ENCODE measurements at regions of chr17 and their contacts with region 1.

Region 1: DNA sequence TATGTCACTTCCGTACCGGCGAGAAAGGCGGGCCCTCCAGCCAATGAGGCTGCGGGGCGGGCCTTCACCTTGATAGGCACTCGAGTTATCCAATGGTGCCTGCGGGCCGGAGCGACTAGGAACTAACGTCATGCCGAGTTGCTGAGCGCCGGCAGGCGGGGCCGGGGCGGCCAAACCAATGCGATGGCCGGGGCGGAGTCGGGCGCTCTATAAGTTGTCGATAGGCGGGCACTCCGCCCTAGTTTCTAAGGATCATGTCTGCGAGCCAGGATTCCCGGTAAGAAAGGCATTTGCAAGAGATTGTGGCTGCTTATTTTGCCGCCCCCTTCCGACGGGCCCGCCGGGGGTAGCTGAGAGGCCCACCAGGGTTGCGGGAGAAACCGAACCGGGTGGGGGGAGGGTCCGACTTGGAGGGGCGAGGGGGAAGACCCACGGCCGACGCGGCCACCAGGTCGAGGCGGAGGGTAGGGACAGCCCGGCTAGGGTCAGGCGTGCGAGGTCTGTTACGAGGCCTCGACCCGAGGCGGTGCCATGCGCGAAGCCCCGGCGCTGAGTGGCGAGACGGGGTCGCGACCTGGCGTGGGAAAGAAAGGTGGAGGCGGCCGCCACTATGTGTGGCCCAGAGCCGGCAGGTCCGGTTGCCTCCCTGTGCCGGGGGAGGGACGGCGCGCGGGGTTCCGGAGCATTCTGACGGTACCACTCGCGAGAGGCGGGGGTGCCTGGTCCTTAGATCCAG is 6.7 kb upstream of the CD68 start:
- DNase-seq: peak; percentile 99 to 100 (median 100)
- ATAC-seq: peak; percentile 83
- H3K4me3 ChIP-seq: peak overlapping the region; percentile 100
- H3K4me3 Mint-ChIP-seq: peak overlapping the region; percentile 99
- H3K27ac ChIP-seq: peak overlapping the region; percentile 96 to 98
- H3K27ac Mint-ChIP-seq: peak overlapping the region; percentile 99
- H3K4me1 ChIP-seq: peaks cover 50% of the 10 kb centered on the region
- H3K4me1 Mint-ChIP-seq: peaks cover 52% of the 10 kb centered on the region
- H3K27me3 ChIP-seq: no peaks in the 10 kb centered on the region
- H3K27me3 Mint-ChIP-seq: peaks cover 3% of the 10 kb centered on the region
- CTCF ChIP-seq: no peak

Region 2: DNA sequence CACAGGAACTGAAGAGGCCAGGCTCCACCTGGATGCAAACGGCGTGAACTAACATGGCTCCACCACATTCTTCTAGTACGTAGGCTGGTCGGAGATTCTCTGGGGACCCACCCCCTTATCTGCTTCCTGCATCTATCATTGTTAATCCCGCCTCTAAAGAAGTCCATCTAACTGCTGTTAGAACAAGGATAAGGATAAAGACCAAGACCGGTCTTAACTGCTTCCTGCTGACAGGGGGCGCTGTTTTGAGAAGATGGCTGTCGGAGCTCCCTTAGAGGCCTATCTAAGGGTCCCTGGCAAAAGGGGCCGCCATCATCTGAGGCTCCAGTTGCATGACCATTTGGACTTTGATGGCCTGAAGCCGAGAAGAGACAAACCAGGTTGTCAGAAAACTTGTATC is 49.7 kb before region 1 on chr17:
- CTCF ChIA-PET with region 1: no interaction called
- POLR2A ChIA-PET with region 1: no interaction called
- intact Hi-C with region 1: no loop called
- DNase-seq: peak in 13 of 14 experiments; percentile 21 to 76 (median 43)
- ATAC-seq: peak; percentile 49
- H3K4me3 ChIP-seq: no peak overlapping the region
- H3K4me3 Mint-ChIP-seq: no peak overlapping the region
- H3K27ac ChIP-seq: no peak overlapping the region
- H3K27ac Mint-ChIP-seq: no peak overlapping the region
- H3K4me1 ChIP-seq: no peaks in the 10 kb centered on the region
- H3K4me1 Mint-ChIP-seq: peaks cover 5% of the 10 kb centered on the region
- H3K27me3 ChIP-seq: no peaks in the 10 kb centered on the region
- H3K27me3 Mint-ChIP-seq: no peaks in the 10 kb centered on the region
- CTCF ChIP-seq: peak; percentile 59

Region 3: DNA sequence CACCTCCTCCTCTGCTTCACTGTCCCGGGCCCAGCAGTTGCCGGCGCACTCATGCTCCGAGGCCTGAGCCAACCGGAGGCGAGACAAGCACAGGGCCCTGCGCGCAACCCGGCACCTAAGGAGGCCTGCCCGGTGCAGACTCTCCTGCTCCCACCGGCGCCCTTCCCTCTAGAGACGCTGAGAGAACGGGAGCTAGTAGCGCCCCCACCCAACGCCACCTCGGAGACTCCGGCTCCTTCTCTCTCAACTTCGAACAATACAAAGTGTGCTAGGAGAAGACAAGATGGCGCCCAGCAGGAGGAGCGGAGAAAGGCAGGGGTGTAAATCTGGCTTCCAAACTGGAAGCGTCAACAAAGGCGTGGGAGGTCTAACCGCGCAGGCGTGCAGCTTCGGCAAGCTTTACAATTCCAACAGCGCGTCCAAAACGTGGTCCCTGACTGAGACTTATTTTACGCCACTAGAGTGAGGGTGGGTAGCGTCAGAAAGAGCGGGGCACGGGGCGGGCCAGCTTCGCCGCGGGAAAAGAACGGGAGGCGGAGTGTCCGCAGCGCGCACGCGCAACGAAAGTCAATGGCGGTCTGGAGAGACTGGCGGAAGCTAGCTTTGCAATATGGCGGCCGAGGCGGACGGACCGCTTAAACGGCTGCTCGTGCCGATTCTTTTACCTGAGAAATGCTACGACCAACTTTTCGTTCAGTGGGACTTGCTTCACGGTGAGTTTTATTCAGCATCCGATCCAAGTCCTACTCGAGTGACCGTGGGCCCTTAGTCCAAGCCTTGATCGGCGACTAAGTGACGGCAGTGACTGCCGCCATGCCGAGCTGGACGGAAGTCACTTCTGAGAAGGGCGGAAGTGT is 10.7 kb after region 1 on chr17 and contains the start of gene MPDU1:
- CTCF ChIA-PET with region 1: interaction called, 4 read pairs
- POLR2A ChIA-PET with region 1: interaction called, 143 read pairs
- intact Hi-C with region 1: loop called (anchors 1 kb)
- DNase-seq: peak; percentile 89 to 98 (median 94)
- ATAC-seq: peak; percentile 85
- H3K4me3 ChIP-seq: peak within 1 kb of the TSS; percentile 86
- H3K4me3 Mint-ChIP-seq: peak within 1 kb of the TSS; percentile 98
- H3K27ac ChIP-seq: peak within 1 kb of the TSS; percentile 78 to 98
- H3K27ac Mint-ChIP-seq: peak within 1 kb of the TSS; percentile 98
- H3K4me1 ChIP-seq: peaks cover 56% of the 10 kb centered on the region
- H3K4me1 Mint-ChIP-seq: peaks cover 52% of the 10 kb centered on the region
- H3K27me3 ChIP-seq: no peaks in the 10 kb centered on the region
- H3K27me3 Mint-ChIP-seq: no peaks in the 10 kb centered on the region
- CTCF ChIP-seq: no peak
- total RNA-seq, gene MPDU1: 12.0 to 12.9 TPM

Region 4: DNA sequence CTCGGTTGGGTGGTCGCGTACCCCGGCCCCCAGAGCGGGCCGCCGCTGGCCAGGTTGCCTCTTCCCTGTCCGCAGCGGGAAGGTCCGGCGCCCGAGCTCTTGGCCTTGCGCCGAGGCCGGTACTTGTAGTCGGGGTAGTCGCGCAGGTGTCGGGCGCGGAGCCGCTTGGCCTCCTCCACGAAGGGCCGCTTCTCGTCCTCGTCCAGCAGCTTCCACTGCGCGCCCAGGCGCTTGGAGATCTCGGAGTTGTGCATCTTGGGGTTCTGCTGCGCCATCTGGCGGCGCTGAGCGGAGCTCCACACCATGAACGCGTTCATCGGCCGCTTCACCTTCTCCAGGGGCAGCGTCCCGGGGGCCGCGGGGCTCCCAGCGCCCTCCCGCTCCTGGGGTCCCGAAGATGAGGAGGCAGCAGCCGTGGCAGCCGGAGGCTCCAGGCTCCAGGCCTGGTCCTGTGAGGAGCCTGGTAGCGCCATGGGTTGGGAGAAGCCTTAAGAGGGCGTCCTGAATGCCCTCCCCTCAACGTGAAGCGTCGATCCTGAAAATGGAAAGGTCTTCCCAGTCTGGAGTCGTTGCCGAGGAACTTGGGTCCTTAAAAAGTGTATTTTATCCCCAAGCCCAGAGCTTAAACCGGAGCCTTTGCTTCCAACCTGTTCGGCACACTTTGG is 16.6 kb after region 1 on chr17:
- CTCF ChIA-PET with region 1: interaction called, 8 read pairs
- POLR2A ChIA-PET with region 1: interaction called, 143 read pairs
- intact Hi-C with region 1: no loop called
- DNase-seq: peak; percentile 47 to 87 (median 62)
- ATAC-seq: peak; percentile 90
- H3K4me3 ChIP-seq: no peak overlapping the region
- H3K4me3 Mint-ChIP-seq: no peak overlapping the region
- H3K27ac ChIP-seq: no peak overlapping the region
- H3K27ac Mint-ChIP-seq: no peak overlapping the region
- H3K4me1 ChIP-seq: peaks cover 31% of the 10 kb centered on the region
- H3K4me1 Mint-ChIP-seq: peaks cover 7% of the 10 kb centered on the region
- H3K27me3 ChIP-seq: no peaks in the 10 kb centered on the region
- H3K27me3 Mint-ChIP-seq: no peaks in the 10 kb centered on the region
- CTCF ChIP-seq: peak; percentile 76

Region 5: DNA sequence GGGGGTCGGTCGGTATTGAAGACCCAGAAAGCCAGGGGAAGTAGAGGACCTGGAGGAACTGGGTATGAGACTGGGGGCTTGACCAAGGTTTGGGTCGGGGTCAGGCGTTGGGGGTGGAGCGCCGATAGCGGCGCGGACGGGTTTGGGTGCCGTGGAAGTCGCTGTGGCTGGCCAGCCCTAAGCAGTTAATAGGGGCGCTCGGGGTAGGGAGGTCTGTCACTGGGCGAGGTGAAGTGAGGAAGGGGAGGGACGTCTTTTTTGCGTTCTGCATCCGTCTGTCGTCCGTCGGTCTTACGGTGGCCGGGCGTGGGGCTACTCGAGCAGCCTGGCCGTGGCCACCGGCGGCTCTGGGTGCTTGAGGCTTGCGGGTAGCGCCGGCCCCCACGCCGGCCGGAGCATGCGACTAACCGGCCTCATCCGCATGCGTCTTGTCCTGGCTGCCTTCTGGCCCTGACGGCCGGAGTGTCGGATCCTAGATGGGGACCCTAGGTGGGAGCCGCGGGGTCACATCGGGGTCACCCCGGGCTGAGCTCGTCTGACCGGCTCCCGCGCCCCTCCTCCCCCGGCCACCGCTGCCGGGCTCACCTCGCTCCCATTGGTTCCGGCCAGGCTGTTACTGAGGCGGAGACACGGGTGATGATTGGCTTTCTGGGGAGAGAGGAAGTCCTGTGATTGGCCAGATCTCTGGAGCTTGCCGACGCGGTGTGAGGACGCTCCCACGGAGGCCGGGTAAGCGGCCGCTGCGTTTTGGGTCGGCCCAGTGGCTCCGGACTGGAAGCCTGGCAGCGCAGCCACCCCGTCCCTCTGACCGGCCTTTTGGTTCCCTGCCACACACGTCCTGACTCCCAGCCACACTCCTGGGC is 271.8 kb after region 1 on chr17:
- CTCF ChIA-PET with region 1: no interaction called
- POLR2A ChIA-PET with region 1: no interaction called
- intact Hi-C with region 1: loop called in 1 of 2 experiments (anchors 5 kb)
- DNase-seq: peak; percentile 56 to 94 (median 73)
- ATAC-seq: peak; percentile 14
- H3K4me3 ChIP-seq: peak overlapping the region; percentile 84
- H3K4me3 Mint-ChIP-seq: peak overlapping the region; percentile 92
- H3K27ac ChIP-seq: peak overlapping the region; percentile 100
- H3K27ac Mint-ChIP-seq: peak overlapping the region; percentile 90
- H3K4me1 ChIP-seq: peaks cover 59% of the 10 kb centered on the region
- H3K4me1 Mint-ChIP-seq: peaks cover 35% of the 10 kb centered on the region
- H3K27me3 ChIP-seq: no peaks in the 10 kb centered on the region
- H3K27me3 Mint-ChIP-seq: peaks cover 10% of the 10 kb centered on the region
- CTCF ChIP-seq: no peak